OCI-LY7 (cell line): ENCODE measurements at regions of chr2 and their contacts with region 1.

Region 1: DNA sequence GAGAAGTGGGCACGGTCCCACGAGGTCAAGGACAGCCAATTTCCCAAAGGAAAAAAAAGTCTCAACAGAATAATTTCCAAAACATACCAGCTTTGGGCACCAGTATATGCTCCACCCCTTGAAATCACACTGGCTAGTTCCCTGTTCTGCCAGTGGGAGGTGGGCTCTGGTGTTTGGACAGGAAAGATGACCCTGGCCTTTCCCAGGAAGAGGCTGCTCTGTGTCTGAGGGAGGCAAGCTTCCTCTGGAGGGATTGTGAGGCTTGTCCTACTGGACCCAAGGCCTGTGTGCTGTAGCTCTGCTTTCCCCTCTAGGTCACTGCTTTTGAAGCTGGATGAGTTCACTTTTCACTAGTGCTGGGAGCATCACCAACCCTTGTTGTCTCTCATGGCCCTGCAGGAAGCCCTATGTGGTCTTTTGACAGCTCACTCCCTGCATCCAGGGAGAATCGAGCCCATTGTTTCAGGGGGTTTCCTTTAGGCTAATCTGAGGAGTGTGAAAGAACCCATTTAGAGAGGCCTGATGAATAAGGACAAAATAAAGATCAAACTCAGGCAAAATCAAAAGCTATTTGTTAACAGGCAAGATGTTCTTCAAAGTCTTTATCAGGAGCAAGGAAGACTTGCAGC is 36.3 kb downstream of the CXCR4 start:
- DNase-seq: no peak
- H3K4me3 ChIP-seq: no peak overlapping the region
- H3K27ac ChIP-seq: no peak overlapping the region
- H3K4me1 ChIP-seq: peaks cover 4% of the 10 kb centered on the region
- CTCF ChIP-seq: no peak

Region 2: DNA sequence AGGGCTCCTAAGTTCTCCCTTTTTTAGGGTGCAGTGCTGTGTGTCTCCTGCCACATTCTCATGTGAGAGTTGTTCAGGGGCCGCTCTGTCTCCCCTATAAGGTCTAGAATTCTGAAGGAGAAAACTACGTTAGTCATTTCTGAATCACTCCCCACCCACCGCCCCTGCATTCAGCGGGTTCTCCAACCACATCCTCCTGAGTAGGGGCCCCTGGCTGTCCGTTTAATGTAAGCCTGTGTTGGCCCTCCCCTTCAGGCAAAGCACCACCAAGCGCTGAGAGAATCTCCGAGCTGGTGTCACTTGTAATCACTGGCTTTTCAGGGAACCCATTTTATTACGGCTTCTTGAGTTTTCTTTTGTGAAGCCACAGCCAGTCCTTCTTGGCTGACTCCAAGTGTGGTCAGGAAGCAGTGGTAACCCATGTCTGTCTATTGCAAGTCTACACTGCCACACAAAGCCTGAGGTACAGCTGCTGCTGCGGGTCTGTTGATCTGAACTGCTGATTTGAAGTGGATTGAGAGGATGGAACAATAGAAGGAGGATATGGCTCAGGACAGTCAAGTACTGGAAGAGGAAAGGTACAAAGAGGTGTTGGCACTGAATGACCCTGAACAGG is 261.6 kb before region 1 on chr2:
- CTCF ChIA-PET with region 1: no interaction called
- POLR2A ChIA-PET with region 1: no interaction called
- intact Hi-C with region 1: no loop called
- DNase-seq: no peak
- H3K4me3 ChIP-seq: no peak overlapping the region
- H3K27ac ChIP-seq: no peak overlapping the region
- H3K4me1 ChIP-seq: no peaks in the 10 kb centered on the region
- CTCF ChIP-seq: no peak

Region 3: GRCh38 chr2:136093583-136093982 is 11.9 kb after region 1 on chr2:
- CTCF ChIA-PET with region 1: no interaction called
- POLR2A ChIA-PET with region 1: interaction called, 17 read pairs
- intact Hi-C with region 1: no loop called
- DNase-seq: no peak
- H3K4me3 ChIP-seq: no peak overlapping the region
- H3K27ac ChIP-seq: no peak overlapping the region
- H3K4me1 ChIP-seq: no peaks in the 10 kb centered on the region
- CTCF ChIP-seq: no peak